ENCODE measurements at regions of chr2 and their contacts with region 1.

Region 1: GRCh38 chr2:97697252-97698235 is 15.8 kb upstream of the ZAP70 start:
- DNase-seq: peak; percentile 9
- H3K4me3 ChIP-seq: no peak overlapping the region
- H3K27me3 ChIP-seq: no peaks in the 10 kb centered on the region
- CTCF ChIP-seq: peak; percentile 86

Region 2: GRCh38 chr2:97663965-97664635 is 33.4 kb before region 1 on chr2 and contains the start of gene ACTR1B:
- CTCF ChIA-PET with region 1: interaction called, 37 read pairs
- POLR2A ChIA-PET with region 1: no interaction called
- DNase-seq: peak; percentile 92
- H3K4me3 ChIP-seq: peak within 1 kb of the TSS; percentile 62
- H3K27me3 ChIP-seq: no peaks in the 10 kb centered on the region
- CTCF ChIP-seq: peak; percentile 75
- polyA plus RNA-seq, gene ACTR1B: 48.4 and 64.6 TPM in 2 replicates

Region 3: GRCh38 chr2:97673182-97673914 is 24.2 kb before region 1 on chr2:
- CTCF ChIA-PET with region 1: interaction called, 19 read pairs
- POLR2A ChIA-PET with region 1: no interaction called
- DNase-seq: no peak
- H3K4me3 ChIP-seq: no peak overlapping the region
- H3K27me3 ChIP-seq: no peaks in the 10 kb centered on the region
- CTCF ChIP-seq: no peak

Region 4: DNA sequence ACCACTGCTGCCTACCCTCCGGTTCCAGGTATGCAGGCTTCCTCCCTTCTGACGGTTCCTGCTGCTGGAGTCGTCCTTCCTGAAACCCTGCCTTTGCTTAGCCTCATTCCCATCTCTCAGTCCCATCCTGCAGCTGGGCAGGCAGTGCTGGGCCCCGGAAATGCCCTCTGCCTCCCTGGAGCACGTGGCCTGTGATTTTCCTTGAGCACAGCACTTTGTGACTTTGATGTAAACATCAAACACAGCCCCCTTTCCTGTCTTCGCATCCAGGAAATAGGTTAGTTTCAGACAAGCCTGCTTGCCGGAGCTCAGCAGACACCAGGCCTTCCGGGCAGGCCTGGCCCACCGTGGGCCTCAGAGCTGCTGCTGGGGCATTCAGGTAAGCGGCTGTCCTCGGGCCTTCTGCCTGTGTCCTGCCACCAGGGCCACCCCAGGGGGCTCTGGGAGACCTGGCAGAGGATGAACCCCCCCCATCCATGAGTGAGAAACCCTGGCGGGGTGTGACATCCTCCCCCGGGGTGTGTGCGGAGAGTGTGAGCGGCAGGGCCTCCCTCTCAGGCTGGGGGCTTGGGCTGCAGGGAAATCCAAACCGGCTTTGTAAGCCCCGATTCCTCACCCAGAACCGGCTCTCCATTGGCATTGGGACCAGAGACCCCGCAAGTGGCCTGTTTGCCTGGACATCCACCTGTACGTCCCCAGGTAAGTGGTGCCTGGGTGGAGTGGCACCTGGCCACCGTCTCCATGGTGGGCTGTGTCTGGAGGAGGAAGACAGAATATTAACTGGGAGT is 15.9 kb after region 1 on chr2 and contains the start of gene ZAP70:
- CTCF ChIA-PET with region 1: interaction called, 39 read pairs
- POLR2A ChIA-PET with region 1: no interaction called
- DNase-seq: no peak
- H3K4me3 ChIP-seq: no peak within 1 kb of the TSS
- H3K27me3 ChIP-seq: no peaks in the 10 kb centered on the region
- CTCF ChIP-seq: no peak
- polyA plus RNA-seq, gene ZAP70: 0.10 and 0.16 TPM in 2 replicates

Region 5: DNA sequence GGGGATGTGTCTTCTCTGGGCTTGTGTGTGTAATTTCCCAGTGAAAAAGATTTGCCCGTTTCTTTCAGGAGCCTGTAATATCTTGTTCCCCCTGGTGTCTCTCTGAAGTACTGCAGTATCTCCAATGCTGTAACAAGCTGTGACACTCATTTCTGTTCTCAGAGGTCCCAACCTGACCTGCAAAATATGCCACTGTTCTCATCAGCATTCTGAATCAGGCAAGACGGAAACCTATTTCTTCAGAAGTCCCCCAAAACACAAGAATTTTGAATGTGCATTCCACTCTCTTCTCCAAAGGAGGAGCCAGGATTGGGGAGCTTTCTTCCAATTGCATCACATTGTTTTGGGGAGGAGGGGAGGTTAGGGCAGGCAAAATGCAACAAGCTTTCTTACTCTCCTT is 571.7 kb after region 1 on chr2:
- CTCF ChIA-PET with region 1: interaction called, 17 read pairs
- POLR2A ChIA-PET with region 1: no interaction called
- DNase-seq: no peak
- H3K4me3 ChIP-seq: no peak overlapping the region
- H3K27me3 ChIP-seq: no peaks in the 10 kb centered on the region; the same call in 1 of the 2 replicates
- CTCF ChIP-seq: peak; percentile 77

Region 6: GRCh38 chr2:98385050-98385699 is 687.6 kb after region 1 on chr2:
- CTCF ChIA-PET with region 1: interaction called, 92 read pairs
- POLR2A ChIA-PET with region 1: interaction called, 3 read pairs
- DNase-seq: no peak
- H3K4me3 ChIP-seq: no peak overlapping the region
- H3K27me3 ChIP-seq: no peaks in the 10 kb centered on the region; the same call in none of the 2 replicates
- CTCF ChIP-seq: peak; percentile 98